AG04449 (cell line): ENCODE measurements at regions of chr3 and their contacts with region 1.

Region 1: GRCh38 chr3:45499529-45499928 is 95.0 kb upstream of the LIMD1 start:
- DNase-seq: no peak
- H3K4me3 ChIP-seq: no peak overlapping the region
- CTCF ChIP-seq: peak; percentile 17

Region 2: DNA sequence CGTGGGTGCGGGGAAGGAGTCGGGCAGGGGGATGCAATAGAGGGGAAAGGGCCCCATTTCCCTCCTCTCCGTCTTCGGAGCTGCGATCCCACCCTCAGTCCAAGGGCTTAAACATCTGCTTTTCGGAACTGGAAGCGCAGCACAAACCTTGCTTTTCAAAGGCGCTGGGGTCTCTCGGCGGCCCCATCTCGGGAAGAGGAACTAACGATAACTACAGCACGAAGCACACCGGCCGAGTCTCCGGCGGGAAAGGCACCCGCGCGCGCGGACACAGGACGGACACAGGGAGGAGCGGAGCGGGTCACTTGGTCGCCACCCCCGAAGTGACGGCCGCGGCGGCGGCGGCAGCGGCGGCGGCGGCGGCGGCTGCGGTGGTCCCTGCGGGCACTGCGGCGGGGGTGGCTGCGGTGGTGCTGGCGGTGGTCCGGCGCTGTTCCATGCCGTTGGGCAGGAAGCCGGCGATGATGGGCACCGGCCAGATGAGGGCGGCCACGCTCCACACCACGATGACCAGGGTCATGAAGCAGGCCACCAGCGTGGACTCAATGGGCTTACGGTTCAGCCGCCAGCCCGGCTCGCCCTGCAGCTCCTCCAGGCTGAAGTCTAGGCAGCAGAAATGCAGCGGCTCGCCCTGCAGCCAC is 274.6 kb before region 1 on chr3:
- CTCF ChIA-PET with region 1: interaction called, 52 read pairs
- POLR2A ChIA-PET with region 1: no interaction called
- DNase-seq: no peak
- H3K4me3 ChIP-seq: peak overlapping the region; percentile 75
- CTCF ChIP-seq: peak; percentile 86

Region 3: GRCh38 chr3:45575381-45575923 is 75.9 kb after region 1 on chr3:
- CTCF ChIA-PET with region 1: no interaction called
- POLR2A ChIA-PET with region 1: no interaction called
- DNase-seq: no peak
- H3K4me3 ChIP-seq: no peak overlapping the region
- CTCF ChIP-seq: no peak

Region 4: GRCh38 chr3:45915518-45916231 is 416.1 kb after region 1 on chr3:
- CTCF ChIA-PET with region 1: no interaction called
- POLR2A ChIA-PET with region 1: no interaction called
- DNase-seq: peak; percentile 72
- H3K4me3 ChIP-seq: no peak overlapping the region
- CTCF ChIP-seq: no peak